ENCODE measurements at regions of chr14 and their contacts with region 1.

Region 1: GRCh38 chr14:22836301-22837113 is at the start of gene MMP14:
- DNase-seq: peak; percentile 81
- H3K4me3 ChIP-seq: peak within 1 kb of the TSS; percentile 71 to 82
- H3K27ac ChIP-seq: peak within 1 kb of the TSS; percentile 92 to 93
- H3K4me1 ChIP-seq: no peaks in the 10 kb centered on the region
- H3K27me3 ChIP-seq: no peaks in the 10 kb centered on the region
- CTCF ChIP-seq: peak in 3 of 4 experiments; percentile 33 to 58 (median 53)
- POLR2A ChIP-seq: peak; percentile 90
- total RNA-seq, gene MMP14: 64.9 to 90.4 TPM

Region 2: GRCh38 chr14:22589096-22589839 is 247.2 kb before region 1 on chr14 and contains the start of gene DAD1:
- intact Hi-C with region 1: loop called (anchors 5 kb)
- DNase-seq: peak; percentile 99
- H3K4me3 ChIP-seq: peak within 1 kb of the TSS; percentile 60 to 73
- H3K27ac ChIP-seq: peak within 1 kb of the TSS; percentile 79 to 84
- H3K4me1 ChIP-seq: peaks cover 7% of the 10 kb centered on the region
- H3K27me3 ChIP-seq: no peaks in the 10 kb centered on the region
- CTCF ChIP-seq: peak in 1 of 4 experiments; percentile 15
- POLR2A ChIP-seq: peak; percentile 90
- total RNA-seq, gene DAD1: 231 to 289 TPM